Gastrocnemius medialis (tissue), 4 donors: ENCODE measurements at regions of chr9 and their contacts with region 1.

Region 1: GRCh38 chr9:98775831-98776441 is 20.4 kb downstream of the ANKS6 start:
- DNase-seq: no peak
- ATAC-seq: peak in 1 of 2 donors; percentile 53
- H3K4me3 ChIP-seq: no peak overlapping the region
- H3K27ac ChIP-seq: no peak overlapping the region
- H3K4me1 ChIP-seq: no peaks in the 10 kb centered on the region
- H3K27me3 ChIP-seq: no peaks in the 10 kb centered on the region
- CTCF ChIP-seq: peak in 4 of 5 experiments; percentile 15 to 59 (median 46)
- POLR2A ChIP-seq: no peak

Region 2: DNA sequence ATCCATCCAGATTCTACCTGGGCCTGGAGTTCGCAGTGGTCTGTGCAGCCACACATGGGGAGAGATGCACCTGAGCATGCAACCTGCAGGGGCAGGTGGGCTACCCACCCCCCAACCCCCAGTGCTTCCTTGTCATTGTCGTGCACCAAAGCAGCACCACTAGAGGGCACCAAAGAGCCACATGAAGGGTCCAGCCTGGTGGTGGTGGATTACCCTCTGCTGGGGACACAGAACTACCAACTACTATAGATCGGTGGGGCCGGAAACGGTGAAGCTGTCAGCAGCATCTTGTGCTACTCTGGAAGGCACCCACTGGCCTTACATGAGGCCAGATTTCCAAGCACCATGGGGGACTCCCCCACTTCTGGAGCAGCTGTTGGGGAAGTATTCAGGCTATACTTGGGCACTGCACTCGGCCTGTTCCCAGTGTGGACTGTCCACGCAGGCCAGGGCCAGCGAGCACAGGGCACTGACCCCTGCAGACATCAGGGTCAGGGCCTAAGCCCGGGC is 460.3 kb before region 1 on chr9:
- in situ Hi-C with region 1: loop called (anchors 5 to 25 kb)
- intact Hi-C with region 1: loop called (anchors 10 kb)
- DNase-seq: peak; percentile 21 to 40
- ATAC-seq: peak; percentile 63 to 73
- H3K4me3 ChIP-seq: no peak overlapping the region
- H3K27ac ChIP-seq: no peak overlapping the region
- H3K4me1 ChIP-seq: no peaks in the 10 kb centered on the region
- H3K27me3 ChIP-seq: no peaks in the 10 kb centered on the region
- CTCF ChIP-seq: peak; percentile 59 to 83 (median 71)
- POLR2A ChIP-seq: no peak